CD14-positive monocyte (primary cell): ENCODE measurements at regions of chr13 and their contacts with region 1.

Region 1: DNA sequence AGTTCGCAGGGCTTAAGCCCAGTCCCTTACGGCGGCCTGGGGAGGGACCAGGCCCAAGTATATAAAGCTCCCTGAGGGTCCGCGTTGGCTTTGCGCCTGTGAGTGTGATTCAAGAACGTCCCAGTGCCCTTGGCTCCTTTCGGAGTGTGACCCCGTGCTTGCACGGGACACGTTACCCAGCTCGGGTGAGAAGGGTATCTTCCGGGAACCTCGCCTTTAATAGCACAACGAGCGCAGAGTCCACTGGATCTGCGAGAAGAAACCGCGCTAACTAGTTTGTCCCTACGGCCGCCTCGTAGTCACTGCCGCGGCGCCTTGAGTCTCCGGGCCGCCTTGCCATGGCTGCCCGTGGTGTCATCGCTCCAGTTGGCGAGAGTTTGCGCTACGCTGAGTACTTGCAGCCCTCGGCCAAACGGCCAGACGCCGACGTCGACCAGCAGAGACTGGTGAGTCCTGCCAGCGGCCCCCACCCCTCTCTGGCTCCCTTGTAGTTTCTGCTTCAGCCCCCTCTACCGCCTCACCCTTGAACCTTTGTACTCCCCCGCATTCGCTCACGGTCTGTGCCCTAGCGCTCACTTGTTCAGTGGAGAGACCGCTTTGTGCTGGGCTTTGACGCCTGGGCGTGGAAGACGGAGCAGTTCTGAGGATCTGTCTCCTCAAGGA is at the start of gene DNAJC15:
- DNase-seq: peak; percentile 70 to 83 (median 75)
- H3K4me3 ChIP-seq: peak within 1 kb of the TSS; percentile 65 to 85 (median 81)
- H3K4me3 Mint-ChIP-seq: peak within 1 kb of the TSS; percentile 93 to 98
- H3K27ac ChIP-seq: peak within 1 kb of the TSS; percentile 94 to 96
- H3K27ac Mint-ChIP-seq: peak within 1 kb of the TSS; percentile 95 to 99 (median 97)
- H3K4me1 ChIP-seq: peaks cover 29 to 36% of the 10 kb centered on the region in 2 donors
- H3K4me1 Mint-ChIP-seq: peaks cover 35% of the 10 kb centered on the region
- H3K27me3 ChIP-seq: no peaks in the 10 kb centered on the region
- H3K27me3 Mint-ChIP-seq: peaks cover 0 to 2% (median 0%) of the 10 kb centered on the region in 3 donors
- CTCF ChIP-seq: peak; percentile 21
- polyA plus RNA-seq, gene DNAJC15: 8.3 to 31.1 (median 22.0) TPM

Region 2: DNA sequence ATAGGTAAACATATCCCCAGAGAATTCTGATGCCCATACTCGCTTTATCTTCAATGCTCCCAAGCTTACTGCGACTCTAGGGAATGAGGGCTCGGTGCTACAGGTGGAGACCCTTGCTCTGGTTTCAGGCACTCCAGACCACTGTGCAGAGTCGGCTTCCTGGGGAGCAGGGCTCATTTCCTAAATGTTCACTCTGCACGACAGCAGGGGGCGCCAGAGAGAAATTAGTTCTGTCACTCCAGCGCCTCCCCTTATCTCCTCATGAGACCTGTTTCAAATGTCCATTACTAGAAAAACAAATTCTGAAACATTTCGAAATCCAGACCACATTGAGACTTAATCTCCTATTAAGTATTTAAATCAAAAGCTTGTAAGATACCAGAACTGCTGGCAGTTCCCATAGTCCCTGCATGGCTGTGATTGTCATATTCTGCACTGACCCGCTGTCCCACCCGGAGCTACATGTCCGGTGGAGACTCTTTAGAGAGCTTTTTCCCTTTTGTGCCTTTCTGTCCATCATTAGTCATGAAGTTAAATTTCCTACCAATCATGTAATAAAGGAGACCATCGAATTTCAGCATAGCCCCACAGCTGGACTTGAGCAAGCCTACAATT is 53.8 kb before region 1 on chr13:
- intact Hi-C with region 1: loop called in 1 of 2 experiments (anchors 5 kb)
- DNase-seq: peak; percentile 60 to 71 (median 69)
- H3K4me3 ChIP-seq: no peak overlapping the region
- H3K4me3 Mint-ChIP-seq: no peak overlapping the region
- H3K27ac ChIP-seq: no peak overlapping the region
- H3K27ac Mint-ChIP-seq: peak overlapping the region in 3 of 7 donors; percentile 49 to 55 (median 54)
- H3K4me1 ChIP-seq: peaks cover 3 to 10% of the 10 kb centered on the region in 2 donors
- H3K4me1 Mint-ChIP-seq: peaks cover 30% of the 10 kb centered on the region
- H3K27me3 ChIP-seq: no peaks in the 10 kb centered on the region
- H3K27me3 Mint-ChIP-seq: no peaks in the 10 kb centered on the region
- CTCF ChIP-seq: peak; percentile 88

Region 3: GRCh38 chr13:43368003-43368402 is 344.6 kb after region 1 on chr13:
- intact Hi-C with region 1: no loop called
- DNase-seq: no peak
- H3K4me3 ChIP-seq: peak overlapping the region in 1 of 3 experiments; percentile 18
- H3K4me3 Mint-ChIP-seq: peak overlapping the region; percentile 28 to 67
- H3K27ac ChIP-seq: no peak overlapping the region
- H3K27ac Mint-ChIP-seq: no peak overlapping the region
- H3K4me1 ChIP-seq: peaks cover 0 to 8% of the 10 kb centered on the region in 2 donors
- H3K4me1 Mint-ChIP-seq: peaks cover 14% of the 10 kb centered on the region
- H3K27me3 ChIP-seq: peaks cover under 1 to 3% of the 10 kb centered on the region in 2 donors
- H3K27me3 Mint-ChIP-seq: peaks cover 4 to 26% (median 8%) of the 10 kb centered on the region in 3 donors
- CTCF ChIP-seq: no peak